ENCODE measurements at regions of chr21 and their contacts with region 1.

Region 1: GRCh38 chr21:25360593-25360992 is 246.7 kb downstream of the MRPL39 start:
- DNase-seq: peak; percentile 40
- ATAC-seq: peak; percentile 57
- H3K4me3 ChIP-seq: no peak overlapping the region
- H3K27ac ChIP-seq: no peak overlapping the region
- H3K4me1 ChIP-seq: peaks cover 26% of the 10 kb centered on the region
- H3K27me3 ChIP-seq: no peaks in the 10 kb centered on the region
- CTCF ChIP-seq: peak; percentile 52

Region 2: DNA sequence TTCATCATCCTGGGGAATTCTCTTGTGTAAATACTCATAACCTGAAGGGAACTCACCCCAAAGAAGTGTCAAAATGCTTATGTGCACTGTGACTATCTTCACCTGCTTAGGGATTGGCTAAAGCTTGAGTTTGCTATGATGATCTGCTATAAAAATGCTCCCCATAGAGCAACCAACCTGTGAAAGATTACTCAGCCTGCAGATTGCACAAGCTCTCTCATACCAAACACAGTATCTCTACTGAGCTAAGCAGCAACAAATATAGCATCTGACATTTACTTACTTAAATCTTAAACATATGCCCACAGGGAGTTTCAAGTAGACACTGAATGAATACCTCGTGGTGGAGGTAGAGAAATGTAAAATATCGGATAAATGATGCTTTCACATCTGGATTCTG is 479.1 kb before region 1 on chr21:
- CTCF ChIA-PET with region 1: no interaction called
- POLR2A ChIA-PET with region 1: no interaction called
- intact Hi-C with region 1: no loop called
- DNase-seq: no peak
- ATAC-seq: no peak
- H3K4me3 ChIP-seq: no peak overlapping the region
- H3K27ac ChIP-seq: no peak overlapping the region
- H3K4me1 ChIP-seq: no peaks in the 10 kb centered on the region
- H3K27me3 ChIP-seq: no peaks in the 10 kb centered on the region
- CTCF ChIP-seq: no peak

Region 3: DNA sequence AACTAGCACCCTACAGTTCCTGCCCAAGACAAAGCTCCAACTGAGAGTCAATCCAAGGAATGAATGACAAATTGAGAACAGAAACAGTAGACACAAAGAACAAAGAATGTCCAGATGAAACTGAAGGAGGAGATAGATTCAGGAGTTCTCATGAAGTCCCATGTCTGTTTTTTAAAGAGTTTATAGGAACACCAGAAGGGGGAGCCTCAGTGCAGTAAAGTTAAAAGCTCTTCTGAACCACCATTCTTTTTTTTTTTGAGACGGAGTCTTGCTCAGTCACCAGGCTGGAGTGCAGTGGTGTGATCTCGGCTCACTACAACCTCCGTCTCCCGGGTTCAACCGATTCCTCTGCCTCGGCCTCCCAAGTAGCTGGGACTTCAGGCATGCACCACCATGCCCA is 76.9 kb before region 1 on chr21:
- CTCF ChIA-PET with region 1: no interaction called
- POLR2A ChIA-PET with region 1: no interaction called
- intact Hi-C with region 1: no loop called
- DNase-seq: peak; percentile 62
- ATAC-seq: peak; percentile 53
- H3K4me3 ChIP-seq: no peak overlapping the region
- H3K27ac ChIP-seq: no peak overlapping the region
- H3K4me1 ChIP-seq: no peaks in the 10 kb centered on the region
- H3K27me3 ChIP-seq: no peaks in the 10 kb centered on the region
- CTCF ChIP-seq: peak; percentile 60

Region 4: DNA sequence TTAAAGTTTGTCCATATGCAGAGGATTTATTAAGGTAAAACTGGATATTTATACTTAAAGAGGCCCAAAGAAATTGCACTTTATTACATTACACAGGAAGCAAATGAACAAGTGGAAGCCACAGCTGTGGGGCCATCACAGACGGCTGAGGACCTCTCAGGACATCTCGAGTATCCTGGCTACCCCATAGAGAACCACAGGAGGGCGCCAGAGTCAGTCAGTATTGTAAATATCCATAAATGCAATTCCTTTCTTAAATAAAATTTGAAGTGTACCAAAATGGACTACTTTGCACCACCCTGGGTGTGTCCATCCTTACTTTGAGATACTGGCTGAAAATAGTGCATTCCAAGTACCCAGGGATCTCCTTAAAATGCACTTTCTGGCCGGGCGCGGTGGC is 10.5 kb before region 1 on chr21:
- CTCF ChIA-PET with region 1: interaction called, 13 read pairs
- POLR2A ChIA-PET with region 1: no interaction called
- intact Hi-C with region 1: no loop called
- DNase-seq: peak; percentile 78
- ATAC-seq: peak; percentile 72
- H3K4me3 ChIP-seq: no peak overlapping the region
- H3K27ac ChIP-seq: no peak overlapping the region
- H3K4me1 ChIP-seq: peaks cover 12% of the 10 kb centered on the region
- H3K27me3 ChIP-seq: no peaks in the 10 kb centered on the region
- CTCF ChIP-seq: peak; percentile 82

Measured in PC-3 (cell line).